Dendritic cell treated with granulocyte-macrophage colony-stimulating factor and Interleukin-4, amounts not matched to agents 40 ng/mL and 50 ng/mL, for 4 days (primary cell): ENCODE measurements at regions of chrX and their contacts with region 1.

Region 1: DNA sequence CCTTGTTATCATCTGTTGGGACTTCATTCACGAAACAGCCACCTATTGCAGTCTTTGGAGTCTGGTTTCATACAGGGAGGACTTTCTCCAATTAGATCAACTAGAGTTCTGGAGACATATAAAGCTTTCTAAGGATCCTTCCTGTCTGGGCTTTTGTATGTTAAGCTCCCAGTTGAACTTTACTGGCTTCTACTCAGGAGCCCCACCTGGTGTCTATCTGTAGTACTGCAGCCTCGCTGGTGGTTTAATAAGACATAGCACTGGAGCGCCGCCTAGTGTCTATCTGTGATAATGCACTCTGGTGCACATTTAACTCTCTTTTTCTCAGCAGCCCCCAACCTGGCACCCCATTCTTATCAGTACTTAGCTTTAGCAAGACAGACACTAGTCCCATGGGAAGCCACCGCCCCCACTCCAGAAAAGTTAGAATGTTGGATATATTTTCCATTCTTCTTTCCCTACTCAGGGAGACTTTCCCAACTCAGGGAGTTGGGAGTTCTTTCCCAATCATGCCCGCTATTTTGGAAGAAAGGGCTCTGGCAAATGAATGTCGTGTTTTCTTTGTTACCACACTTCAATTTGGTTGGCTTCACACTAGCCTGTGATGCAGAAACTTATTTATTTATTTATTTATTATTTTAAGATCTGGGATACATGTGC is 36.9 kb upstream of the SYTL4 start:
- H3K4me3 Mint-ChIP-seq: no peak overlapping the region
- H3K27ac Mint-ChIP-seq: no peak overlapping the region
- H3K4me1 Mint-ChIP-seq: peaks cover 8% of the 10 kb centered on the region
- H3K27me3 Mint-ChIP-seq: peaks cover 6% of the 10 kb centered on the region

Region 2: DNA sequence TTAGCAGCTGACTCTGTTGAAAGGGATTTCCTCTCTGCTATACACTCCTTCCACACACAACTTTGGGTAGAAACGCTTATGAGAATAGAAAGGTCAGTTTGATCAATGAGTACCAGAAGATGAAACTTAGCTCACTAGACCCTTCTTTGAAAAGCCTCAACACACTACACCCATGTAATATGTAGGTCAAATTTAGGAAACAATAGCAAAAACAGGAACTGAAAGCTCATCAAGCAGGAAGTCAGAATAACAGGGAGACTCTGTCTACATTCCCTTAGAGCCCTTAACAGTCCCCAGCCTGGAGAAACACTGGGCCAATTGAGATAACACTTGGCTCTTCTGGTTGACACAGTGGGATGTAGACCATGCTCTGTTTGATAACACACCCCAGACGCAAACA is 94.1 kb before region 1 on chrX:
- intact Hi-C with region 1: loop called (anchors 5 kb)
- H3K4me3 Mint-ChIP-seq: no peak overlapping the region
- H3K27ac Mint-ChIP-seq: no peak overlapping the region
- H3K4me1 Mint-ChIP-seq: peaks cover 25% of the 10 kb centered on the region
- H3K27me3 Mint-ChIP-seq: peaks cover 59% of the 10 kb centered on the region